Dendritic cell treated with granulocyte-macrophage colony-stimulating factor and Interleukin-4, amounts not matched to agents 40 ng/mL and 50 ng/mL, for 4 days (primary cell): ENCODE measurements at regions of chr6 and their contacts with region 1.

Region 1: GRCh38 chr6:24064082-24064481 is 61.9 kb upstream of the NRSN1 start:
- H3K4me3 Mint-ChIP-seq: no peak overlapping the region
- H3K27ac Mint-ChIP-seq: no peak overlapping the region
- H3K4me1 Mint-ChIP-seq: no peaks in the 10 kb centered on the region
- H3K27me3 Mint-ChIP-seq: no peaks in the 10 kb centered on the region

Region 2: DNA sequence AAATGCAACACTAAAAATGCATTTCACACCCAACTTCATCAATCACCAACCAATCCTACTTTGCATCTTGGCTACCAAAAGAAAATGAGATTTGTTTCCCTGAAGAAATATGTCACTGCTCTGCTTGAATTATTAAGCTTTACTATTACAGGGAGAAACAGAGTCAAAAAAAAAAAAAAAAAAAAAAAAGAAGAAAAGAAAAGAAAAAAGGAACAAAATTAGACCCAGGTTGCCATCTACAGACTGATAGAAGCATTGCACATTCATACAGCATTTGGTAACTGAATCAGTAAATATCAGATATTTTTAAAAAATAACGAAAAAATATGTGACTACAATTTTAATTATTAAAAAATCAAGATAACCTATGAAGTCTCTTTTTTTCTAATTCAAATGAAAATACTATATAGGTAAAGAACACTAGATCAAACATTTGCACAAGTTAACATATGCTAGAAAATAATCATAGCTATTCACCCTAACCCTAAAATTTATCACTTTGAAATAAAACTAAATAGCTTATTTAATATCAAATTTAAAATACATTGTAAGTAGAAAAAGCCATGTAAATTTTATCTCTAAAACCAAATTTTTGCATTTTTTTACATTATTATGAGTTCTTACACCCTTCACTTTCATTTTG is 210.5 kb after region 1 on chr6:
- intact Hi-C with region 1: loop called (anchors 10 kb)
- H3K4me3 Mint-ChIP-seq: no peak overlapping the region
- H3K27ac Mint-ChIP-seq: no peak overlapping the region
- H3K4me1 Mint-ChIP-seq: no peaks in the 10 kb centered on the region
- H3K27me3 Mint-ChIP-seq: peaks cover 2% of the 10 kb centered on the region